ENCODE measurements at regions of chr1 and their contacts with region 1.

Region 1: GRCh38 chr1:67853704-67854103 is 20.4 kb upstream of the GNG12 start:
- DNase-seq: peak; percentile 85
- ATAC-seq: peak; percentile 66
- H3K4me3 ChIP-seq: no peak overlapping the region
- H3K27ac ChIP-seq: no peak overlapping the region
- H3K4me1 ChIP-seq: peaks cover 17% of the 10 kb centered on the region
- H3K27me3 ChIP-seq: no peaks in the 10 kb centered on the region
- CTCF ChIP-seq: peak; percentile 97

Region 2: DNA sequence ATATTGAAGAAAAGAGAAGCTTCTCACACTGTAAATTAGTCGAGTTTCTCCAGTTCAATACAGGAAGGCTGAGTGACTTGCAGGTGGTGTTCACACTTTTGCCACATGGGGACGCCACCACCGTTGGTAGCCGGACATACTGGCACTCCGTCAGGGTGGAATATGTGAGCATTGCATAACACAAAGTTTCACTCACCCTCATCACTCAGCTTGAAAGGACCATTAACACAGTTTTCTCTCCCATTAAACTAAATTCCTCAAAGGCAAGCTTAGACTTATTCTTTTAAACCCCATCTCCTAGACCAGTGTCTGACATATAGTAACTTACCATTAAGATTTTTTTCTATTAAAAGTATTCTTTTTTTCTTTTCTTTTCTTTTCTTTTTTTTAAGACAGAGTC is 318.2 kb before region 1 on chr1:
- CTCF ChIA-PET with region 1: no interaction called
- POLR2A ChIA-PET with region 1: no interaction called
- intact Hi-C with region 1: loop called (anchors 5 kb)
- DNase-seq: peak; percentile 87
- ATAC-seq: peak; percentile 83
- H3K4me3 ChIP-seq: no peak overlapping the region
- H3K27ac ChIP-seq: no peak overlapping the region
- H3K4me1 ChIP-seq: peaks cover 15% of the 10 kb centered on the region
- H3K27me3 ChIP-seq: no peaks in the 10 kb centered on the region
- CTCF ChIP-seq: peak; percentile 98

Region 3: GRCh38 chr1:67766141-67766978 is 87.3 kb before region 1 on chr1:
- CTCF ChIA-PET with region 1: interaction called, 25 read pairs
- POLR2A ChIA-PET with region 1: no interaction called
- intact Hi-C with region 1: loop called (anchors 1 kb)
- DNase-seq: peak; percentile 62
- ATAC-seq: peak; percentile 59
- H3K4me3 ChIP-seq: peak overlapping the region; percentile 54
- H3K27ac ChIP-seq: peak overlapping the region; percentile 33
- H3K4me1 ChIP-seq: peaks cover 34% of the 10 kb centered on the region
- H3K27me3 ChIP-seq: no peaks in the 10 kb centered on the region
- CTCF ChIP-seq: peak; percentile 92

Region 4: DNA sequence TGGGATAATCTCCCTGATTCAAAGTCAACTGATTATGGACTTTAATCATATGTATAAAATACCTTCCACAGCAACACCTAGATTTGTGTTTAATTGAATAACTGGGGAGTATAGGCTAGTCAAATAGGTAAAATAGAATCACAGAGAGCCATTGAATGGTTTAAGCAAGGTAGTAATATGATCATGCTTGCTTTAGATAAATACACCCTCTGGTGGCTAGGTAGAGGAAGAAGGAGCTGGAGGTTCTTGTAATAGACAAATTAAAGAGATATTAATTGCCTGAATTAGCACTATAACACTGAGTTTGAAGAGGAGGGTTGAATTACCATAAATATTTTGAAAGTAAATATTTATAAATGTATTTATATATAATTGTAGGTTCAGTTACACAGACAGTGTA is 156.4 kb after region 1 on chr1:
- CTCF ChIA-PET with region 1: interaction called, 7 read pairs
- POLR2A ChIA-PET with region 1: no interaction called
- intact Hi-C with region 1: loop called (anchors 1 kb)
- DNase-seq: peak; percentile 53
- ATAC-seq: peak; percentile 82
- H3K4me3 ChIP-seq: no peak overlapping the region
- H3K27ac ChIP-seq: no peak overlapping the region
- H3K4me1 ChIP-seq: no peaks in the 10 kb centered on the region
- H3K27me3 ChIP-seq: no peaks in the 10 kb centered on the region
- CTCF ChIP-seq: peak; percentile 73

Region 5: DNA sequence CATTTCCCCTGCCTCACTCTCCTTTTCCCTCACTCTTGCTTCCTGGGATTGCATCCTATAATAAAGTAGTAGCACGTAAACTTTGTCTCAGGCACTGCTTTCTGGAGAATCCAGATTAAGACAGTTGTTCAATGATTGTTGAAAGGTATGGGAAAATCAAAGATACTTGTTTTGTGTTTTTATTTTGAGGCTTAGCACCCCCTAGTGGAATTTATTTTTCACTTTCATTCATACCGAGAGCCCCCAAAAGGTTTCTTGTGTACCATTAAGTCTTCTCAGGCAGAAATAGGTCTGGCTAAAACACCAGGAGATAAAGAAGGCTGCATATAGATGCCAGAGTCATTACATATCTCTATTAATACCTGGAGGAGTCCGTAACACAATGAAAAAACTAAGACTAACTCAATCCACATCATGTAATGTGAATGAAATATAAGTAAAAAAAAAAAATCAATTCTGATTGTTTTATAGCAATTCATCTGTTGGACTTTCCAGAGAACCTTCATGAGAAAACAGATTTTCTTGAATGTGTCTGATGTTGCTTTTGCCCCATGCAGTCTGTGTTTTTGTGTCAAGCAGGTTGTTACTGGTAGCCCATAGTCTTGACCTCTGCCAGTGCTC is 492.6 kb after region 1 on chr1:
- CTCF ChIA-PET with region 1: no interaction called
- POLR2A ChIA-PET with region 1: no interaction called
- intact Hi-C with region 1: loop called (anchors 5 kb)
- DNase-seq: peak; percentile 58
- ATAC-seq: 0 out of 2 replicates have a peak, but pooled peaks have one; percentile 22
- H3K4me3 ChIP-seq: no peak overlapping the region
- H3K27ac ChIP-seq: no peak overlapping the region
- H3K4me1 ChIP-seq: no peaks in the 10 kb centered on the region
- H3K27me3 ChIP-seq: 0 out of 2 replicates have a peak, but pooled peaks cover 4% of the 10 kb centered on the region
- CTCF ChIP-seq: peak; percentile 80